WTC11 (cell line): ENCODE measurements at regions of chr2 and their contacts with region 1.

Region 1: GRCh38 chr2:232611551-232612218 is 21.7 kb upstream of the EFHD1 start:
- DNase-seq: peak; percentile 86
- ATAC-seq: peak; percentile 79
- H3K4me3 Mint-ChIP-seq: no peak overlapping the region
- H3K27ac Mint-ChIP-seq: no peak overlapping the region
- H3K4me1 Mint-ChIP-seq: no peaks in the 10 kb centered on the region
- H3K27me3 Mint-ChIP-seq: no peaks in the 10 kb centered on the region
- CTCF ChIP-seq: peak; percentile 86

Region 2: DNA sequence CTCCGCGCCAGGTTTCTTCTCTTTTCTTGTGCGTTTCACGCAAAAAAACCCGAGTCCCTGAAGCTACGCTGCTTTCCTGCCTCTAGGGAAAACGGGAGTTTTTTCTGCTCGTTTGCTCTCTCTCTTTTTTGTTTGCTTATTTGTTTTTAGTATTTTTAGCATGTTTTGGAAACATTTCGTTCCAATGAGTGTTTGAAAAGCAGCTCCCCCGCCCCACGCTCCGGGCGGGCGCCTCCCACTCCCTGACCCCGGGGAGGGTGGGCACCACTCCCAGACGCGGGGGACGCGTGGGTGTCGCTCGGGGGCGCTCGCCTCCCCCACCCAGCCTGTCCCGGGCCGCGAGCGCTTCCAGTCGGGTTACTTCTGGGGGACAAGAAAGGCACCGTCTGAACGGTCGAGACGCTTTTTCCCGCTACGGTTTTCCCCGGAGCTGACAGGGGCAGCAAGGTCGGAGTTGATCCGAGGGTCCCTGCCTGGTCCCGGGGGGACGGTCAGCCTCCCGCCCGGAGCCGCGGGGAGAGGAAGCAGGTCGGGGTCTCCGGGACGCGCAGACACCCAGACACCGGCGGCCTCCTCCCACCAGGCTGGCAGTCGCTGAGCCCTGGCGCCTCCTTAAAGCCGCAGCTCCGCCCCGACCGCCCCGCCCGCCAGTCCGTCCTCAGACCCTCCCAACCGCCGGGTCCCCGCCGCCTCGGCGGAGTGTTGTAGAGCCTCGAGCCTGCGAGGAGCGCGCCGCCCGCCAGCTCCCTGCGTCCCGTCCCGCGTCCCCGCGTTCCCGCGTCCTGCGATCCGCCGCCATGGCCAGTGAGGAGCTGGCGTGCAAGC is 21.4 kb after region 1 on chr2 and contains the start of gene EFHD1:
- CTCF ChIA-PET with region 1: interaction called, 14 read pairs
- POLR2A ChIA-PET with region 1: no interaction called
- DNase-seq: peak; percentile 88
- ATAC-seq: peak; percentile 93
- H3K4me3 Mint-ChIP-seq: peak within 1 kb of the TSS; percentile 68
- H3K27ac Mint-ChIP-seq: no peak within 1 kb of the TSS
- H3K4me1 Mint-ChIP-seq: 0 out of 2 replicates have a peak, but pooled peaks cover 3% of the 10 kb centered on the region
- H3K27me3 Mint-ChIP-seq: peaks cover 68% of the 10 kb centered on the region
- CTCF ChIP-seq: no peak
- total RNA-seq, gene EFHD1: 5.4 to 6.8 TPM (median 6.1 TPM) in 3 replicates

Region 3: GRCh38 chr2:232668805-232669444 is 57.2 kb after region 1 on chr2:
- CTCF ChIA-PET with region 1: interaction called, 19 read pairs
- POLR2A ChIA-PET with region 1: no interaction called
- DNase-seq: peak; percentile 47
- ATAC-seq: peak; percentile 82
- H3K4me3 Mint-ChIP-seq: no peak overlapping the region
- H3K27ac Mint-ChIP-seq: no peak overlapping the region
- H3K4me1 Mint-ChIP-seq: no peaks in the 10 kb centered on the region
- H3K27me3 Mint-ChIP-seq: no peaks in the 10 kb centered on the region
- CTCF ChIP-seq: no peak